ENCODE measurements at regions of chr3 and their contacts with region 1.

Region 1: GRCh38 chr3:191244242-191244867 is 45.3 kb downstream of the OSTN start:
- DNase-seq: no peak
- ATAC-seq: no peak
- H3K4me3 ChIP-seq: no peak overlapping the region
- H3K27ac ChIP-seq: no peak overlapping the region
- H3K4me1 ChIP-seq: no peaks in the 10 kb centered on the region
- H3K27me3 ChIP-seq: no peaks in the 10 kb centered on the region
- CTCF ChIP-seq: no peak; the same call in 1 of the 2 replicates

Region 2: DNA sequence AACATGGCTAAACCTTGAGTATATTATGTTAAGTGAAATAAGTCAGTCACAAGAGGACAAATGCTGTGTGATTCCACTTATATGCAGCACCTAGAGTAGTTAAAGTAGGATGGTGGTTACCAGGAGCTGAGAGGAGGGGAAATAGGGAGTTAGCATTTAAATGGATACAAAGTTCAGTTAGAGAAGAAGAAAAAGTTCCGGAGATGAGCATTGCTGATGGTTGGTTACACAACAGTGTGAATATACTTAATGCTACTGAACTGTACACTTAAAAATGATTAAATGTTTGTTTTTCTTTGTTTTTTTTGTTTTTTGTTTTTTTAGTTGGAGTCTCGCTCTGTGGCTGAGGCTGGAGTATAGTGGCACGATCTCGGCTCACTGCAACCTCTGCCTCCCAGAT is 113.0 kb before region 1 on chr3:
- CTCF ChIA-PET with region 1: no interaction called
- POLR2A ChIA-PET with region 1: no interaction called
- in situ Hi-C with region 1: no loop called
- intact Hi-C with region 1: no loop called
- DNase-seq: no peak
- ATAC-seq: no peak
- H3K4me3 ChIP-seq: no peak overlapping the region
- H3K27ac ChIP-seq: no peak overlapping the region
- H3K4me1 ChIP-seq: no peaks in the 10 kb centered on the region
- H3K27me3 ChIP-seq: no peaks in the 10 kb centered on the region
- CTCF ChIP-seq: no peak

Region 3: DNA sequence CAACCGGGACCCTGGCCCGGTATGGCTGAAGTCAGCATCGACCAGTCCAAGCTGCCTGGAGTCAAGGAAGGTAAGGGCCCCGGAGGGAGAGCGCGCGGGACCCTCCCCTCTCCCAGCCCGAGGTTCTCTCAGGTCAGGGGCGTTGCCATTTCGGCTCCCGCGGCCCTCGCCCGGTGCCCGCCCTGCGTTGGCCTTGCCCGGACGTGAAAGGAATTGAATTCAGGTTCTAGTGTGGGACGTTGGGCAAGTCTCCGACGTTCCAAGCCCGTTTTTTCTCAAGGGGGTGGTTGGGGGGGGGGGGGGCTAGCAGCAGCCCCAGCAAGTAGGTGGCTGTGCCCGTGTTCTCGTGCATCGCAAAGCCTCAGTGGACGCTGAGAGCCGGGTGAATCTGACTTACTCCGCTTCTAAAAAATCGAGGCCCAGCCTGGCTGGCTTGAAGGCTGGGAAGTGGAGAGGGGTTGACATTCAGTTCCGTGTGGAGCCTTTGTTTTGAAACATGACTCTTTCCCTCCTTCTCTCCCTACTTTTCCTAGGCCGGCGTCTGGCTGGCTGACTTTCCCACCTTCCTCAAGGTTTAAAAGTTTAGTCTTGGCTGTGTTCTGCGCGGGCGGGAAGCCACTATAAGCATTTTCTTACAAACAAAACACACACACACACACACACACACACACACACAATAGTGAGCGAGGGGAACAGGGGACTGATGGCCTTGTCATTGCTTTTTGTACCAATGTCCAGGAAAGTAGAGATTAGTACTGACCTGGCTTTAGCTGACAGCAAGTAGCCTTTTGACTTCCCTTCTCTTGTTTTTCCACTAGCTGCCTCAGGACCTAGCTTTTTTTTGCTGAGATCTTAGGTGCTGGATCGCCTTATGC is 85.5 kb after region 1 on chr3 and contains the start of gene UTS2B:
- CTCF ChIA-PET with region 1: no interaction called
- POLR2A ChIA-PET with region 1: no interaction called
- in situ Hi-C with region 1: no loop called
- intact Hi-C with region 1: loop called (anchors 10 kb)
- DNase-seq: no peak
- ATAC-seq: peak; percentile 66
- H3K4me3 ChIP-seq: peak within 1 kb of the TSS; percentile 71 to 81
- H3K27ac ChIP-seq: peak within 1 kb of the TSS; percentile 93
- H3K4me1 ChIP-seq: peaks cover 42% of the 10 kb centered on the region
- H3K27me3 ChIP-seq: no peaks in the 10 kb centered on the region
- CTCF ChIP-seq: no peak
- total RNA-seq, gene UTS2B: 0.26 TPM

Region 4: DNA sequence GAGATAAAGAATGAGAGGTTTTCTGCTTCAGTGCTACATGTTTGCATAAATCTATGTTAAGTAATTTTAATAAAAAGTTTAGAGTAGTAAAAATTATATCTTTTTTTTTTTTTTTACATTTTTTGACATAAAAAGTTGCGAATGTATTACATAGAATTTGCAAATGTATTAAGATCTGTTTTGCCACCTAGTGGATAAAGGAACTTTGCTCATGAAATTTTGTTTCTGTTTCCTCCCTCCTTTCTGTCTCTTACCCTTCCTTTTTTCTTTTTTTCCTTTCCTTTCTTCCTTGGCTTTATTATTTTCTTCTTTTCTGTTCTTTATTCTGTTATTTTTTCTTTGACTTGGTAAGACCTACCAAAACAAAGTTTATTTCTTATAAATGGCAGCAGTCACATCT is 144.5 kb after region 1 on chr3:
- CTCF ChIA-PET with region 1: no interaction called
- POLR2A ChIA-PET with region 1: no interaction called
- in situ Hi-C with region 1: no loop called
- intact Hi-C with region 1: loop called (anchors 5 kb)
- DNase-seq: no peak
- ATAC-seq: no peak
- H3K4me3 ChIP-seq: no peak overlapping the region
- H3K27ac ChIP-seq: no peak overlapping the region
- H3K4me1 ChIP-seq: no peaks in the 10 kb centered on the region
- H3K27me3 ChIP-seq: no peaks in the 10 kb centered on the region
- CTCF ChIP-seq: peak; percentile 25; the same call in 1 of the 2 replicates

Region 5: DNA sequence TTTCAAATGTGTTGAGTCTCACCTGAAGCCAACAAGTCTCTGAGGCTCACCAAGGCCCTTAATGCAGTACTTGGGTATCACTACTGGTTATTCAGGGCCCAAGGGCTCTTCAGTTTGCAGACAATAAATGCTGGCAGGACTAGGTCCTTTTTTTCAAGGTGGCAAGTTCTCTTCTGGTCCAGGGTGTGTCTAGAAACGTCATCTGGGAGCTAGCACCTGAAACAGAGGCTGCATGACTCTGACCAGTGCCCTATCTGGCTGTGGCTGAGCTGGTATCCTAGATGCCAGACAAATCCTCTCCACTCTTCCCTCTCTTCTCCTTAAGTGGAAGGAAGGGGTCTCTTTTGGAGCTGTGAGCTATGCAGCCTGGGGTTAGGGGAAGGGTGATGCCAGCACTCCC is 493.4 kb after region 1 on chr3:
- CTCF ChIA-PET with region 1: no interaction called
- POLR2A ChIA-PET with region 1: no interaction called
- in situ Hi-C with region 1: no loop called
- intact Hi-C with region 1: no loop called
- DNase-seq: no peak
- ATAC-seq: no peak
- H3K4me3 ChIP-seq: no peak overlapping the region
- H3K27ac ChIP-seq: no peak overlapping the region
- H3K4me1 ChIP-seq: no peaks in the 10 kb centered on the region
- H3K27me3 ChIP-seq: no peaks in the 10 kb centered on the region
- CTCF ChIP-seq: no peak